ENCODE measurements at regions of chr4 and their contacts with region 1.

Region 1: DNA sequence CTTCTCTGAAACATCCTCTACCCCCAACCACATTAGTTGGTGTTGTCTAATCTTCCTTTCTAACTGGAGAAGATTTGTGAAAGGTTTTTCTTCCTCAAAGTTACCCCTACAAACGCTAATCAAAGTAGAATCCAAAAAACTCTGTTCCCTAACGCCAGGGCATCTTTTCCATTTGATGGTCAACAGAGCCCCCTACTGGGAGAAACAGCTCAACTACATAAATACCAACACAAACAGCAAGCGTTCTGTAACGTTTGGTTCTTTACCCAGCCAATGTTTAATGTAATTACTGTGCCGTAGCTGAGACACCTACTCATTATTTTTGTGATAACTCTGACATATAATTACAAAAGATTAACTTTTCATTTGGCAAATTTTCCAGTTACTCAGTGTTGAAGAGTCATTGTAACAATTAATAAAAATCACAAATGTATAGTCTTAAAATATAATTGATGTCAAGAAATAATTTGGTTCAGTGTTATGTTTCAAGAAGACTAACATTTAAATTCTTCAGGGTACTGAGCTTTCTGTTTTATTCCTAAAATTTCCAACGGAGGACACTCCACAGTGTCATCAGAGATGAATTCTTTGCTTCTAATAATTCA is 94.9 kb upstream of the TBC1D9 start:
- DNase-seq: peak; percentile 33
- ATAC-seq: peak; percentile 95
- H3K4me3 ChIP-seq: no peak overlapping the region
- H3K27ac ChIP-seq: no peak overlapping the region
- H3K4me1 ChIP-seq: no peaks in the 10 kb centered on the region
- H3K27me3 ChIP-seq: no peaks in the 10 kb centered on the region
- CTCF ChIP-seq: peak; percentile 65 to 83 (median 68)
- EP300 ChIP-seq: no peak
- POLR2A ChIP-seq: no peak
- RAD21 ChIP-seq: peak; percentile 99

Region 2: GRCh38 chr4:140427106-140427961 is 423.8 kb before region 1 on chr4 and contains the start of gene CLGN:
- CTCF ChIA-PET with region 1: no interaction called
- POLR2A ChIA-PET with region 1: no interaction called
- RAD21 ChIA-PET with region 1: no interaction called
- SMC1A ChIA-PET with region 1: no interaction called
- in situ Hi-C with region 1: no loop called
- intact Hi-C with region 1: loop called (anchors 5 kb)
- DNase-seq: peak; percentile 2
- ATAC-seq: peak; percentile 96
- H3K4me3 ChIP-seq: peak within 1 kb of the TSS; percentile 55
- H3K27ac ChIP-seq: no peak within 1 kb of the TSS
- H3K4me1 ChIP-seq: peaks cover 5% of the 10 kb centered on the region; the same call in 1 of the 2 replicates
- H3K27me3 ChIP-seq: peaks cover 0 to 5% of the 10 kb centered on the region in 2 experiments; a peak in 2 of 4 replicates
- CTCF ChIP-seq: peak; percentile 9 to 28 (median 21); a peak in 3 of 6 replicates
- EP300 ChIP-seq: no peak
- POLR2A ChIP-seq: no peak
- RAD21 ChIP-seq: no peak
- polyA plus RNA-seq, gene CLGN: 0.53 to 0.73 TPM

Region 3: DNA sequence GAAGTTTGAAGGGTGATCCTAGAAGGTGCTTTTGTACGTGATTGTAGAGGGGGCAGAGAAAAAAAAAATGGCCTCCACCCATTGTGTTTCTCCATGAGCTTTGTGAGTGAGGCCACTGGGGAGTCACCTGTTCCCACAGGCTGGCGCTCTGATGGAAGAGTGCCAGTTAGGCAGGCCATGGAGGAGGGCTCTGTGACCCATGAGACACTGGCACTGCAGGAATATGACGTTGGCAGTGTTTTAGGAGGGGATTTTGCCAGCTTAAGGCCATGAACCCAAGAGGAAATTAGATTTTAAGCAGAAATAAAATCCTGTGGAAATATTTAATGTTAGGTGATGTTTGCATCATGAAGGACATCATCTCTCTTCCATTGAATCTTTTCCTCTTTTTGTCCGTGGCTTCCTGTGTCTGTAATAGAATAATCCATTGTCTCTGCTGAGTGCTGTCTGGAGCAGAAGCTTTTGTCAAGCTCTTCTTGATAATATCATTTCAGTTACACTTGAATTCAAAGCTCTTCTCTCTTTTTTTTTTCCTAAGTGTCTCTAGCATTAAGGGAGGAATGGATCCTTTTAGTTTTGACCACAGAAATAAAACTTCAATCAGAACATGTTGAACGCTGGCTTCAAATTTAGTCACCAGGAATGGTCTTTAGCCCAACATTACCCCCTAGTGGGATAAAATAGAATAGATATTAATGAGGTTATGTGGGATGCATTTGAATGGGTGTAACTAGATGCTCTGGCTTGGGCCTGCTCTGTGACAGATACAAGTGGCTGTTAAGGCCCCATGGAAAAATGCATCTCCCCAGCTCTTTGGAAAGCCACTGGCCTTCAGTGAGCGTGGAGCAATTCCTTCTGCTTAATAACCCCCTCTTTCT is 241.3 kb before region 1 on chr4:
- CTCF ChIA-PET with region 1: interaction called, 19 read pairs
- POLR2A ChIA-PET with region 1: no interaction called
- RAD21 ChIA-PET with region 1: interaction called, 3 read pairs
- SMC1A ChIA-PET with region 1: interaction called, 5 read pairs
- in situ Hi-C with region 1: loop called (anchors 10 kb)
- intact Hi-C with region 1: loop called (anchors 5 kb)
- DNase-seq: peak; percentile 19
- ATAC-seq: peak; percentile 91
- H3K4me3 ChIP-seq: no peak overlapping the region
- H3K27ac ChIP-seq: no peak overlapping the region
- H3K4me1 ChIP-seq: no peaks in the 10 kb centered on the region
- H3K27me3 ChIP-seq: no peaks in the 10 kb centered on the region
- CTCF ChIP-seq: peak; percentile 39 to 68 (median 52); a peak in 5 of 6 replicates
- EP300 ChIP-seq: no peak
- POLR2A ChIP-seq: no peak
- RAD21 ChIP-seq: peak; percentile 85

Region 4: GRCh38 chr4:140686796-140687195 is 164.3 kb before region 1 on chr4:
- CTCF ChIA-PET with region 1: no interaction called
- POLR2A ChIA-PET with region 1: no interaction called
- RAD21 ChIA-PET with region 1: no interaction called
- SMC1A ChIA-PET with region 1: no interaction called
- in situ Hi-C with region 1: no loop called
- intact Hi-C with region 1: no loop called
- DNase-seq: no peak
- ATAC-seq: no peak
- H3K4me3 ChIP-seq: no peak overlapping the region
- H3K27ac ChIP-seq: no peak overlapping the region
- H3K4me1 ChIP-seq: no peaks in the 10 kb centered on the region
- H3K27me3 ChIP-seq: no peaks in the 10 kb centered on the region
- CTCF ChIP-seq: no peak
- EP300 ChIP-seq: no peak
- POLR2A ChIP-seq: no peak
- RAD21 ChIP-seq: no peak

Region 5: GRCh38 chr4:140743194-140743931 is 107.8 kb before region 1 on chr4:
- CTCF ChIA-PET with region 1: interaction called, 23 read pairs
- POLR2A ChIA-PET with region 1: no interaction called
- RAD21 ChIA-PET with region 1: interaction called, 12 read pairs
- SMC1A ChIA-PET with region 1: interaction called, 5 read pairs
- in situ Hi-C with region 1: no loop called
- intact Hi-C with region 1: loop called (anchors 2 kb)
- DNase-seq: peak; percentile 58
- ATAC-seq: peak; percentile 81
- H3K4me3 ChIP-seq: peak overlapping the region; percentile 13; the same call in 1 of the 2 replicates
- H3K27ac ChIP-seq: peak overlapping the region; percentile 83
- H3K4me1 ChIP-seq: peaks cover 25% of the 10 kb centered on the region
- H3K27me3 ChIP-seq: no peaks in the 10 kb centered on the region
- CTCF ChIP-seq: peak in 2 of 3 experiments; percentile 34 to 44; a peak in 3 of 6 replicates
- EP300 ChIP-seq: peak in 1 of 2 experiments; percentile 73; a peak in 2 of 4 replicates
- POLR2A ChIP-seq: no peak
- RAD21 ChIP-seq: peak; percentile 52

Region 6: GRCh38 chr4:140884431-140885058 is 33.4 kb after region 1 on chr4:
- CTCF ChIA-PET with region 1: interaction called, 5 read pairs
- POLR2A ChIA-PET with region 1: no interaction called
- RAD21 ChIA-PET with region 1: no interaction called
- SMC1A ChIA-PET with region 1: interaction called, 10 read pairs
- in situ Hi-C with region 1: no loop called
- intact Hi-C with region 1: no loop called
- DNase-seq: peak; percentile 9
- ATAC-seq: peak; percentile 98
- H3K4me3 ChIP-seq: no peak overlapping the region
- H3K27ac ChIP-seq: no peak overlapping the region
- H3K4me1 ChIP-seq: no peaks in the 10 kb centered on the region
- H3K27me3 ChIP-seq: no peaks in the 10 kb centered on the region
- CTCF ChIP-seq: peak; percentile 77 to 82 (median 80)
- EP300 ChIP-seq: no peak
- POLR2A ChIP-seq: no peak
- RAD21 ChIP-seq: peak; percentile 93

Region 7: GRCh38 chr4:141513866-141514265 is 662.7 kb after region 1 on chr4:
- CTCF ChIA-PET with region 1: no interaction called
- POLR2A ChIA-PET with region 1: no interaction called
- RAD21 ChIA-PET with region 1: no interaction called
- SMC1A ChIA-PET with region 1: no interaction called
- in situ Hi-C with region 1: no loop called
- intact Hi-C with region 1: no loop called
- DNase-seq: no peak
- ATAC-seq: no peak
- H3K4me3 ChIP-seq: no peak overlapping the region
- H3K27ac ChIP-seq: no peak overlapping the region
- H3K4me1 ChIP-seq: no peaks in the 10 kb centered on the region
- H3K27me3 ChIP-seq: no peaks in the 10 kb centered on the region
- CTCF ChIP-seq: no peak
- EP300 ChIP-seq: no peak
- POLR2A ChIP-seq: no peak
- RAD21 ChIP-seq: no peak